ENCODE measurements at regions of chr19 and their contacts with region 1.

Region 1: GRCh38 chr19:18117692-18118378 is 20.3 kb downstream of the MAST3 start:
- DNase-seq: no peak
- ATAC-seq: peak; percentile 92
- H3K4me3 ChIP-seq: peak overlapping the region; percentile 63 to 68
- H3K27ac ChIP-seq: peak overlapping the region; percentile 78
- H3K4me1 ChIP-seq: peaks cover 10% of the 10 kb centered on the region
- H3K27me3 ChIP-seq: no peaks in the 10 kb centered on the region
- CTCF ChIP-seq: no peak

Region 2: GRCh38 chr19:18160971-18161635 is 43.3 kb after region 1 on chr19:
- CTCF ChIA-PET with region 1: interaction called, 5 read pairs
- POLR2A ChIA-PET with region 1: no interaction called
- in situ Hi-C with region 1: no loop called
- intact Hi-C with region 1: loop called (anchors 10 kb)
- DNase-seq: no peak
- ATAC-seq: peak; percentile 89
- H3K4me3 ChIP-seq: no peak overlapping the region
- H3K27ac ChIP-seq: no peak overlapping the region
- H3K4me1 ChIP-seq: peaks cover 17% of the 10 kb centered on the region
- H3K27me3 ChIP-seq: no peaks in the 10 kb centered on the region
- CTCF ChIP-seq: peak; percentile 95

Region 3: DNA sequence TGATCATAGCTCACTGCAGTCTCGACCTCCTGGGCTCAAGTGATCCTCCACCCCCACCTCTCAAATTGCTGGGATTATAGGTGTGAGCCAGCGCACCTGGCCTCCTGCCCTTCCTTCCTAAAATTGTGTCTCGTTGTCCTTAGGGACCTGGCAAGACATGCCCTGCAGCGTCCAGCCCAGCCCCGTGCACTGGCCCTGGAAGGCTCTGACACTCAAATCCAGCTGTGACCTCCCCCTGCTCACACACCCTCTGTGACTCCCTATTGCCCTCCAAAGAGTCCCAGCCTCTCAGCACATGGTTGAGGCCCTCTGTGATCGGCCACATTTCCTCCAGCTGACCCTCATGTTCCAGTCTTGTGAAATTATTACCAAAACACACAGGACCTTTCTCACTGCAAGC is 80.1 kb after region 1 on chr19:
- CTCF ChIA-PET with region 1: no interaction called
- POLR2A ChIA-PET with region 1: no interaction called
- in situ Hi-C with region 1: no loop called
- intact Hi-C with region 1: no loop called
- DNase-seq: no peak
- ATAC-seq: no peak
- H3K4me3 ChIP-seq: no peak overlapping the region
- H3K27ac ChIP-seq: no peak overlapping the region
- H3K4me1 ChIP-seq: 0 out of 2 replicates have a peak, but pooled peaks cover 2% of the 10 kb centered on the region
- H3K27me3 ChIP-seq: no peaks in the 10 kb centered on the region
- CTCF ChIP-seq: no peak

Region 4: DNA sequence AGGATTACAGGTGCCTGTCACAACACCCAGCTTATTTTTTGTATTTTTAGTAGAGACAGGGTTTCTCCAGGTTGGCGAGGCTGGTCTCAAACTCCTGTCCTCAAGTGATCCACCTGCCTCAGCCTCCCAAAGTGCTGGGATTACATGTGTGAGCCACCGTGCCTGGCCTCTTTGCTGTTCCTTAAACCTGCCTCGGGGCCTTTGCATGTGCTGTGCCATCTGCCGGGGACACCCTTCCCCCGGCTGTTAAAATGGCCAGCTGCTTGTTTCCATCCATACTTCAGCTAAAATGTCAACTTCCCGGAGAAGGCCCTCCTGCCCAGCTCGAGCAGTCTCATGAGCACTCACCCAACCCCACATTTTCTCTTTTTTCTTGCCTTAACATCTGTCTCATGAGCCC is 127.5 kb after region 1 on chr19:
- CTCF ChIA-PET with region 1: no interaction called
- POLR2A ChIA-PET with region 1: interaction called, 12 read pairs
- in situ Hi-C with region 1: no loop called
- intact Hi-C with region 1: no loop called
- DNase-seq: no peak
- ATAC-seq: no peak
- H3K4me3 ChIP-seq: no peak overlapping the region
- H3K27ac ChIP-seq: no peak overlapping the region
- H3K4me1 ChIP-seq: no peaks in the 10 kb centered on the region
- H3K27me3 ChIP-seq: no peaks in the 10 kb centered on the region
- CTCF ChIP-seq: no peak

Measured in Panc1 (cell line).